ENCODE measurements at regions of chr20 and their contacts with region 1.

Region 1: DNA sequence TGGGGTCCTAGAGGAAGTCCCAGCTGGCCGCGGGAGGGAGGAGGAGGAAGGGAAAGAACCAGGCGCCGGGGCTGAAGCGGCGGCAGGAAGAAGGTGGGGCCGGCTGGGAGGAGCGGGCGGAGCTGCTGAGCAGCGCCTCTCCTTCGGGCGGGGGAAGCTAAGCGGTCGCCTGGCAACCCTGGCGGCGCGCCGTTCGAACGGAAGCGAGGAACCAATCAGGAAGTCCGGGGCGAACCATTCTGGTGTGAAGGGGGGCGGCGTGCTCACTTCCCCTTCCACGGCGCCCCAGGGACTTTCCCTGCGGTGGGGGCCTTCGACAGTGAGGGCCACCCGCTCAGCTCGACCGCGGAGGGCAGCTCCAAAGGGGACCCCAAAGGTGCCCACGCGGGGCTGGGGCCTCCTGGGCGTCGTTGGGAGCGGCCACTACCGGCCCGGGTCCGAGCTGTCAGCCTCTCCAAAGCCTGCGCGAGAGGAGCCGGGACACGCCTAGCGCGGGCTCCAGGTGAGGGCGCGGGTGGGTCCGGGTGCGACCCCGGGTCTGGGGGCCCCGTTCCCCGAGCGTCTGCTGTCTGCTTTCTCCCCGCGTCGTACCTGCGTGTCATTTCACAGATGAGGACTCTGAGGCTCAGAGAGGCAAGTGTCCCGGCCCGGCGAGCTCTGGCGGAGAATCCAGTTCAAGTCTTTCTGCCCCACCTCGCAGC is at the start of gene FAM110A:
- DNase-seq: peak; percentile 95
- H3K4me3 ChIP-seq: peak within 1 kb of the TSS; percentile 84
- H3K27ac ChIP-seq: peak within 1 kb of the TSS; percentile 49
- H3K4me1 ChIP-seq: peaks cover 34% of the 10 kb centered on the region
- CTCF ChIP-seq: no peak
- total RNA-seq, gene FAM110A: 15.9 and 16.2 TPM in 2 replicates

Region 2: DNA sequence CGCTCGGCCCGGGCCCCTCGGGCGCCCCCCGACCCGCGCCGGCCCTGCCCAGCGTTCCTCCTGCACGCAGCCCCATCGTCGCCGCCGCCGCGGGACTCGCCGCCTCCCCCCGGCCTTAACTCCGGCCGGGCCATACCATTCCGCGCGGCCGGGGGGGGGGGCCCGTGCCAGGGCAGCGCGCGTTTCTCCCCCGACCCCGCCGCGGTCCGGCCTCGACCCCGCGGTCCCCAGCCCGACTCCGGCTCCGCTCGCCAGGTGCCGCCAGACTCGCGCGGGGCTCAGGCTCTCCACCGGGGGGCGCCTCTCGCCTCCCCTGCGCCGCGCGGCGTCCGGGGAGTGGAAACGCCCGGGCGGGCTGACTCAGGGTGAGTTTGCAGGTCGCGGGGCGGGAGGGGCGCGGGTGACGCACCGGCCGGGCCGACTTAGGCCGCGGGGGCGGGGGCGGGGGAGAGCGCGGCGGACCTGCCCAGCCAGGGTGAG is 180.4 kb before region 1 on chr20 and contains the start of gene SRXN1:
- CTCF ChIA-PET with region 1: no interaction called
- POLR2A ChIA-PET with region 1: no interaction called
- intact Hi-C with region 1: loop called (anchors 10 kb)
- DNase-seq: peak; percentile 95
- H3K4me3 ChIP-seq: peak within 1 kb of the TSS; percentile 99
- H3K27ac ChIP-seq: peak within 1 kb of the TSS; percentile 42
- H3K4me1 ChIP-seq: peaks cover 15% of the 10 kb centered on the region
- CTCF ChIP-seq: peak; percentile 85
- total RNA-seq, gene SRXN1: 12.4 and 18.6 TPM in 2 replicates

Region 3: DNA sequence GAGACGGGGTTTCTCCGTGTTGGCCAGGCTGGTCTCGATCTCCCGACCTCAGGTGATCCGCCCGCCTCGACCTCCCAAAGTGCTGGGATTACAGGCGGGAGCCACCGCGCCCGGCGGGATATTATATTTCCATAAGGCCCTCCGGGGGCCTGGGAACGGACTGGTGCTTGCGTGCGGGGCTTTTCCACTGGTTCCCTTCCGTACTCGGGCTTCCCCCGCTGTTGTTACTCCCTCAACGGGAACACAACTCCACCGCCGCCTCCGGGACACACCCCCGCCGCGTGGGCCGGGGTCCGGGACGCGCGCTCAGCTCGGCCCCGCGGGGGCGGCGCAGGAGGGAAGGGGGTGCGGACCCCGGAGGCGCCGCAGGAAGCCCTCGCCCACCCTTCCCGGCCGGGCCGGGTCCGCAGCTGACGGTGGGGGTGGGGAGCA is 105.8 kb before region 1 on chr20:
- CTCF ChIA-PET with region 1: no interaction called
- POLR2A ChIA-PET with region 1: no interaction called
- intact Hi-C with region 1: no loop called
- DNase-seq: no peak
- H3K4me3 ChIP-seq: no peak overlapping the region
- H3K27ac ChIP-seq: no peak overlapping the region
- H3K4me1 ChIP-seq: no peaks in the 10 kb centered on the region
- CTCF ChIP-seq: no peak

Region 4: DNA sequence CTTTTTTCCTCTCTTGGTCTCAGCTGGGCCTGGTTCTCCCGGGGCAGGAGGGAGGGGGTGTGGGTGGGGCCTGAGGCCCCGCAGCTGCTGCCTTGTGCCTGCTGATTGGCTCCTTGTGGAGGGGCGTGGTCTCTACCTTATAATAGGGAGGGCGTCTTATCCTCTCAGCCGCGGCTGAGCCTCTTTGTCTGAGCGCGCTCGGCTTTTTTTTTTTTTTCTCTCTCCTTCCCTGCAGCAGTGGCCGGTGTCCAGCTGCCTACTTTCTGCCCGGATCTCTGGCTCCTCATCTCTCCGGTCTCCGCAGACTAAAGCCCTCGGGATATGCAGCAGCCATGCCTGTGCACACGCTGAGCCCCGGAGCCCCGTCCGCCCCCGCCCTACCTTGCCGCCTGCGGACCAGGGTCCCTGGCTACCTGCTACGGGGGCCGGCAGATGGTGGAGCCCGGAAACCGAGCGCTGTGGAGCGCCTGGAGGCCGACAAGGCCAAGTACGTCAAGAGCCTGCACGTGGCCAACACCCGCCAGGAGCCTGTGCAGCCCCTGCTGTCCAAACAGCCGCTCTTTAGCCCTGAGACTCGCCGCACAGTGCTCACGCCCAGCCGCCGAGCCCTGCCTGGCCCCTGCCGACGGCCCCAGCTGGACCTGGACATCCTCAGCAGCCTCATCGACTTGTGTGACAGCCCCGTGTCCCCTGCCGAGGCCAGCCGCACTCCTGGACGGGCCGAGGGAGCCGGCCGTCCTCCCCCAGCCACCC is 11.0 kb after region 1 on chr20:
- CTCF ChIA-PET with region 1: interaction called, 7 read pairs
- POLR2A ChIA-PET with region 1: interaction called, 40 read pairs
- intact Hi-C with region 1: loop called (anchors 1 kb)
- DNase-seq: peak; percentile 95
- H3K4me3 ChIP-seq: peak overlapping the region; percentile 77
- H3K27ac ChIP-seq: peak overlapping the region; percentile 80
- H3K4me1 ChIP-seq: peaks cover 65% of the 10 kb centered on the region
- CTCF ChIP-seq: no peak

Region 5: DNA sequence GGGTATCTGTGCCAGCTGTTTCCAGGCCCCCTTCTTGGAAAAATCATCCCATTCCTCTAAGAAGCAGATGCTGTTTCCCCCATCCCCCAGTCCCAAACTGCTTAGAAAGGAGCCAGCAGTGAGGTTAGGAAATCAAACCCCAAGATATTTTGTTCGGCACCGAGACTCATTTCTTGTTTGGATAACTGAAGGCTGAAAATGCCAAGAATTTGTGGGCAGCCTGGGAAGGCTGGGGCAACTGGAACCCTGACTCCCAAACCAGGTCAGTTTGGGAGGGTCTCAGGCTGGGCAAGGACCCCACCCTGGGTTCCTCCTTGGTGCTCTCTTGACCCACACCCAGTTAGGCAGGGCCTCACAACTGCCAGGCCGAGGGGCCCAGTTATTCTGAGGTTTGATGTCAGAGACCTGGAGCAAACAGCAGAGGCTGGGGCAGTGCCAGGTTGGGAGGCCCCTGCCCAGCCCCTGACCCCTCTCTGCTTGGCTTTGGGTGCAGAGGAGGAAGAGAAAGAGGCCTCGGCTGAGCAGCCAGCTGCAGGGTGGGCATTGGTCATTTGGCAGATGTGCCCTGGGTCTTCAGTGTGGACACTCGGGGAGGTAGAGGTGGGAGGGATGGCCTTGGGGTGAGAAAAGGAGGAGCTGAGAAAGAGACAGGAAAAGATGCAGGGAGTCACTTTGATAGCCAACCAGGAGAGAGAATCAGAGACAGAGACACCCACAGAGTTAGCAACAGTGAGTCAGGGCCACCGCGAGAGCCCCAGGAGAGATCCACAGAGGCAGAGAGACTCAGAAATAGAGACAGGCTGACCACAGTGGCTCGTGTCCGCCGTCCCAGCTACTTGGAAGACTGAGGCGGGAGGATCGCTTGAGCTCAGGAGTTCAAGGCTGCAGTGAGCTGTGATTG is 77.5 kb after region 1 on chr20:
- CTCF ChIA-PET with region 1: no interaction called
- POLR2A ChIA-PET with region 1: no interaction called
- intact Hi-C with region 1: no loop called
- DNase-seq: no peak
- H3K4me3 ChIP-seq: no peak overlapping the region
- H3K27ac ChIP-seq: no peak overlapping the region
- H3K4me1 ChIP-seq: no peaks in the 10 kb centered on the region
- CTCF ChIP-seq: no peak

Region 6: DNA sequence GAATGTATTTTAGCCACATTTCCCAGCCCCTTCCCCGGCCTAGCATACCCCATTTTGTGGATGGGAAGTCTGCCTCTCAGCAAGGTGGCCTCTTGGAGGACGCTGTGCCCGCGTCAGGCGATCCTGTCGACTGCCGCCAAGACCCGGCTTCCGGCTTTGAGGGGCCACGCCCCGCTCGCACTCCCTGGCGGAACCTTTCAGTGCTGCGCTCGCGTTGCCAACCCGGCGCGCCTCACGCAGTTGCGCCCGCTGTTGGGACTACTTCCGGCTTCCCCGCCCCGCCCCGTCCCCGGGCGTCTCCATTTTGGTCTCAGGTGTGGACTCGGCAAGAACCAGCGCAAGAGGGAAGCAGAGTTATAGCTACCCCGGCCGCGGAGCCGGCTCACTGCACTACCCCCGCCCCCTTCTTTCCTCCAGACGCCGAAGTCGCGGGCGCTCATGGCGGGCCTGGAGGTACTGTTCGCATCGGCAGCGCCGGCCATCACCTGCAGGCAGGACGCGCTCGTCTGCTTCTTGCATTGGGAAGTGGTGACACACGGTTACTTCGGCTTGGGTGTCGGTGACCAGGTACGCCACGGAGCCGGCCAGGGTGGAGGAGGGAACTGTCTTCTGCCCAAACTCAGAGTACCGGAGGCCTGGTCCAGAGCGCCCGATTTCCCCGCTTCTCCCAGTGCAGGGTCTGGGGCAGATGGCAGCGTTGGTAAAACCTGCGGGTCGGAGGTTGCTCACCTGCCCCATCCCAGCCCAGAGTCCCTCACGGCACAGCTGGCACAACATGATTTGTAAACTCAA is 284.9 kb after region 1 on chr20 and contains the start of gene PSMF1:
- CTCF ChIA-PET with region 1: no interaction called
- POLR2A ChIA-PET with region 1: no interaction called
- intact Hi-C with region 1: loop called (anchors 5 kb)
- DNase-seq: peak; percentile 97
- H3K4me3 ChIP-seq: peak within 1 kb of the TSS; percentile 96
- H3K27ac ChIP-seq: peak within 1 kb of the TSS; percentile 53
- H3K4me1 ChIP-seq: peaks cover 41% of the 10 kb centered on the region
- CTCF ChIP-seq: no peak
- total RNA-seq, gene PSMF1: 31.7 and 34.7 TPM in 2 replicates

Measured in OCI-LY7 (cell line).